Mucosa of descending colon (tissue), 3 donors: ENCODE measurements at regions of chr3 and their contacts with region 1.

Region 1: GRCh38 chr3:57100046-57100695 is 39.7 kb downstream of the SPATA12 start:
- DNase-seq: peak in 1 of 3 donors; percentile 85
- ATAC-seq: peak; percentile 91
- H3K4me3 ChIP-seq: no peak overlapping the region
- H3K4me1 ChIP-seq: no peaks in the 10 kb centered on the region
- CTCF ChIP-seq: peak; percentile 71

Region 2: DNA sequence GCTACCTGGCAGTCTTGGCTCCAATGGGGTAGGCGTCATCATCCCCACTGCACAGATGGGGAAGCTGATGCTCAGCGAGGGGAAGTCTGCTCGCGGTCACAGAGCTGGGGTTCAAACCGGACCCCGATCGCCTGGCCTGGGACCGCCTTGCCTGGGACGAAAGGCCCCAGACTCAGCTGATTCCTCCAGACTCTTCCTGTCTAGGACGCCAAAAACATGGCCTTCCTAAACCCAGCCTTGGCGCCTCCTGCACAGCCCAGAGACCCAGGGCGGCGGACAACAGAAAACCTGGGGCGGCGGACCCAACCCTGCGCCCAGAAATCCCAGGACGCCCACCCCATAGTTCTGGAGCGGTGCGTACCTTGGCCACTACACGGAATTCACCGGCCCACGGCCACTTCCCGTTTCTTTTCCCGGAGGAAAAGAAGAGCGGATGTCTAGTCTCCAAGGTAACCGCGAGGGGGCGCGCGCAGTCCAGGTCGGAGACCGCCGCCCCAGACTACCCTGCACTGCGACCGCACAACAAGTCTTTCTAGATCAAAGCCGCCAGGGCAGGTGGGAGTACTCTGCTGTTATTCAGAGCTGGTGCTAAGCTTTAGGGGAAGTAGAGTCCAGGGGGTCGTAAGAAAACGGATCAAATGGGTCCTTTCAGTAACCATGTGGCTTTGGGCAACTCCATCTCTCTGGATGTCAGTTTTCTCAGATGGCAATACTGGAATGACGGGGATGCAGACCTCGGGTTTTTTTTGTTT is 69.9 kb after region 1 on chr3:
- intact Hi-C with region 1: loop called in 1 of 2 experiments (anchors 10 kb)
- DNase-seq: peak; percentile 66 to 80 (median 79)
- ATAC-seq: peak; percentile 92
- H3K4me3 ChIP-seq: no peak overlapping the region
- H3K4me1 ChIP-seq: no peaks in the 10 kb centered on the region
- CTCF ChIP-seq: peak; percentile 81